Panc1 (cell line): ENCODE measurements at regions of chr1 and their contacts with region 1.

Region 1: DNA sequence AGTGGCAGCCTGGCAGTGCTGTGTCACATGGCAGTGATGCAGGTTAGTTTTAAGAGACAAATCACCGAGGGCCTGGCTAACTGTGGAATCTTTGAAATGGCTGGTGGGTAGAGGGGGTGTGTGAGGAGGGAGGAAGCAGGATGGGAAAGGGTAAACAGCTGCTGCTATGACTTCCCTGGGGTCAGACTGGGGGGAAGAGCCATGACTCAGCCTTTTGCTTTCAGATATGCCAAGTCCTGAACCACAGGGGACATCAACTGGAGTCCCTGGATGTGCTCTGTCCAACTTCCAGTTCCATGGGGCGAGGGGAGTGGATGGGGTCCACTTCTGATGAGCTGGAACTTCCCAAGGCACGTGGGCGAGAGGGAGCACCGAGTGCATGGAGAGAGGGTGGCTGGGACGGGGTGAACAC is 121.1 kb upstream of the ADAR start:
- DNase-seq: no peak
- ATAC-seq: no peak
- H3K4me3 ChIP-seq: no peak overlapping the region
- H3K27ac ChIP-seq: no peak overlapping the region
- H3K4me1 ChIP-seq: no peaks in the 10 kb centered on the region
- H3K27me3 ChIP-seq: peaks cover 3% of the 10 kb centered on the region; the same call in 1 of the 2 replicates
- CTCF ChIP-seq: no peak

Region 2: DNA sequence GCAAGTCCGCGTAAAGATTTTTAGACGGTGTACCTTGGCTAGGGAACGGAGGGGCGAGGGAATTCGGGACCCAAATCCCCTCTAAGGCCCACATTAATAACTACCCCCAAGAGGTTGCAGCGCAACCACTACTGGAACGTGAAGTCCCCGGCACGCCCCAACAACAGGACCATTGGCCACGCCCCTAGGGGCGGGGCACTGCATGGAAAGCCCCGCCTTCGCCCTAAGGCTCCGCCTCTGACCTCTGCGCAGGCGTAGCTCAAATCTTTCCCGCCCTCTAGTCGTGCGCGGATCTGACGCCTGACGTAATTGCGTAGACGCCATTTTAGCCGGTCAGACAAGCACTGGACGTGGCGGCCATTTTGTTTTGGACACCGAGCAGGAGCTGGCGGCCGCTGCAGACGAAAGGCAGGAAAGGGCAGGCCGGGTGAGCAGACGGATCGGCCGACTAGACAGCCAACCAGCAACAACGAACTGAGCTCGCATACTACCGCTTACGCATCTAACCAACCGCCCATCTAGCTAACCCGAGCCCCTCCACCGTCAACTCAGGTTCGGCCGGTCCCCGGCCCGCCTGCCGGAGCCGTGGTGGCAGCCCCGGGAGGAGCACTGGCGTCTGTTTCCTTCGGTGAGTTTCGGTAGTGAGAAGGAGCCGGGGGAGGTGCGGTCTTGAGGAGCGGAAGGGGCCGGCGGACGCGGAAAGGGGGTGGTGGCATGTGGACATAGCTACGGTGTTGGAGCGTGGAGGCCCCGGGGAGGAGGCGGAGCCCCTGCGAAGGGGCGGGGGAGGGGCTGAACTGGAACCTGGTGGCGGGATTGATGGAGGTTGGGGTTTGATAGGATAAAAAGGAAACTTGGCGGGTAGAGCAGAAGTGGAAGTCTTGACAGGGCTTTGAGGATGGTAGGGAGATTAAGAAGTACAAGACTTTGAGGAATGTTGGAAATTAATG is 1095.0 kb before region 1 on chr1 and contains the start of gene CHTOP:
- CTCF ChIA-PET with region 1: no interaction called
- POLR2A ChIA-PET with region 1: no interaction called
- in situ Hi-C with region 1: no loop called
- intact Hi-C with region 1: no loop called
- DNase-seq: peak; percentile 97
- ATAC-seq: peak; percentile 95
- H3K4me3 ChIP-seq: peak within 1 kb of the TSS; percentile 75 to 93
- H3K27ac ChIP-seq: peak within 1 kb of the TSS; percentile 92
- H3K4me1 ChIP-seq: peaks cover 17% of the 10 kb centered on the region
- H3K27me3 ChIP-seq: no peaks in the 10 kb centered on the region
- CTCF ChIP-seq: no peak
- total RNA-seq, gene CHTOP: 87.0 TPM

Region 3: GRCh38 chr1:154220071-154220969 is 508.7 kb before region 1 on chr1 and contains the start of gene UBAP2L:
- CTCF ChIA-PET with region 1: no interaction called
- POLR2A ChIA-PET with region 1: interaction called, 10 read pairs
- in situ Hi-C with region 1: no loop called
- intact Hi-C with region 1: no loop called
- DNase-seq: peak; percentile 95
- ATAC-seq: peak; percentile 96
- H3K4me3 ChIP-seq: peak within 1 kb of the TSS; percentile 89 to 99
- H3K27ac ChIP-seq: peak within 1 kb of the TSS; percentile 99
- H3K4me1 ChIP-seq: peaks cover 29% of the 10 kb centered on the region
- H3K27me3 ChIP-seq: no peaks in the 10 kb centered on the region
- CTCF ChIP-seq: no peak
- total RNA-seq, gene UBAP2L: 227 TPM

Region 4: GRCh38 chr1:154772606-154773506 is 43.8 kb after region 1 on chr1:
- CTCF ChIA-PET with region 1: no interaction called
- POLR2A ChIA-PET with region 1: no interaction called
- in situ Hi-C with region 1: no loop called
- intact Hi-C with region 1: no loop called
- DNase-seq: no peak
- ATAC-seq: no peak
- H3K4me3 ChIP-seq: no peak overlapping the region
- H3K27ac ChIP-seq: no peak overlapping the region
- H3K4me1 ChIP-seq: no peaks in the 10 kb centered on the region
- H3K27me3 ChIP-seq: no peaks in the 10 kb centered on the region
- CTCF ChIP-seq: no peak

Region 5: GRCh38 chr1:155001675-155002463 is 272.8 kb after region 1 on chr1:
- CTCF ChIA-PET with region 1: no interaction called
- POLR2A ChIA-PET with region 1: no interaction called
- in situ Hi-C with region 1: no loop called
- intact Hi-C with region 1: loop called (anchors 5 kb)
- DNase-seq: peak; percentile 97
- ATAC-seq: peak; percentile 80
- H3K4me3 ChIP-seq: peak overlapping the region; percentile 69 to 74
- H3K27ac ChIP-seq: peak overlapping the region; percentile 94
- H3K4me1 ChIP-seq: peaks cover 33% of the 10 kb centered on the region
- H3K27me3 ChIP-seq: no peaks in the 10 kb centered on the region
- CTCF ChIP-seq: peak; percentile 80; the same call in 1 of the 2 replicates

Region 6: GRCh38 chr1:155063550-155064110 is 334.6 kb after region 1 on chr1 and contains the start of gene EFNA4:
- CTCF ChIA-PET with region 1: no interaction called
- POLR2A ChIA-PET with region 1: no interaction called
- in situ Hi-C with region 1: no loop called
- intact Hi-C with region 1: no loop called
- DNase-seq: no peak
- ATAC-seq: peak; percentile 83
- H3K4me3 ChIP-seq: peak within 1 kb of the TSS; percentile 83 to 85
- H3K27ac ChIP-seq: peak within 1 kb of the TSS; percentile 69
- H3K4me1 ChIP-seq: peaks cover 19% of the 10 kb centered on the region
- H3K27me3 ChIP-seq: no peaks in the 10 kb centered on the region
- CTCF ChIP-seq: no peak
- total RNA-seq, gene EFNA4: 8.0 TPM

Region 7: GRCh38 chr1:155553349-155553748 is 824.3 kb after region 1 on chr1:
- CTCF ChIA-PET with region 1: no interaction called
- POLR2A ChIA-PET with region 1: no interaction called
- in situ Hi-C with region 1: no loop called
- intact Hi-C with region 1: no loop called
- DNase-seq: no peak
- ATAC-seq: no peak
- H3K4me3 ChIP-seq: no peak overlapping the region
- H3K27ac ChIP-seq: no peak overlapping the region
- H3K4me1 ChIP-seq: 0 out of 2 replicates have a peak, but pooled peaks cover 2% of the 10 kb centered on the region
- H3K27me3 ChIP-seq: no peaks in the 10 kb centered on the region
- CTCF ChIP-seq: no peak